Panc1 (cell line): ENCODE measurements at regions of chr13 and their contacts with region 1.

Region 1: GRCh38 chr13:20960663-20961309 is 58.2 kb upstream of the XPO4 start:
- DNase-seq: no peak
- ATAC-seq: no peak
- H3K4me3 ChIP-seq: peak overlapping the region; percentile 14 to 35
- H3K27ac ChIP-seq: no peak overlapping the region
- H3K4me1 ChIP-seq: peaks cover 2% of the 10 kb centered on the region; the same call in 1 of the 2 replicates
- H3K27me3 ChIP-seq: no peaks in the 10 kb centered on the region
- CTCF ChIP-seq: no peak

Region 2: DNA sequence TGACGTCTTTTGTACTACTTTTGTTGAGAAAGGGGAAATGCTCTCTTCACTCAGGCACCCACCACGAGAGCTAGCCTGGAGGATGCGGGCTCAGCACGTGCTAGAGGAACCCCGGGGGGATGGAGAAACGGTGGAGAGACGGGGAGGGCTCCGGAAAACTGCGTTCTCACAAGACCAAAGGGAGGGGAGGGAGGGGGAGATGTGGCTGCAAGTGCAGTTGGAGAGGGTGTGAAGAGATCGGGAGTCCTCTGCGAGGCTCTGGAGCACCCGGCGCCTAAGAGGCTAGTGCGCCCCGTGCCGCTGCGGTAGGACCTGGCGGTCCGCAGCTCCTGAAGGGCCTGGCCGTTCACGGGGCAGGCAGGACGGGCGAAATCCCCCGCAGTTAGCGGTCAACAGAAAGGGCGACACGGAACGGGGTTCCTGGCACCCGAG is 14.8 kb before region 1 on chr13:
- CTCF ChIA-PET with region 1: interaction called, 16 read pairs
- POLR2A ChIA-PET with region 1: no interaction called
- in situ Hi-C with region 1: no loop called
- intact Hi-C with region 1: no loop called
- DNase-seq: no peak
- ATAC-seq: no peak
- H3K4me3 ChIP-seq: no peak overlapping the region
- H3K27ac ChIP-seq: no peak overlapping the region
- H3K4me1 ChIP-seq: no peaks in the 10 kb centered on the region
- H3K27me3 ChIP-seq: no peaks in the 10 kb centered on the region
- CTCF ChIP-seq: no peak

Region 3: DNA sequence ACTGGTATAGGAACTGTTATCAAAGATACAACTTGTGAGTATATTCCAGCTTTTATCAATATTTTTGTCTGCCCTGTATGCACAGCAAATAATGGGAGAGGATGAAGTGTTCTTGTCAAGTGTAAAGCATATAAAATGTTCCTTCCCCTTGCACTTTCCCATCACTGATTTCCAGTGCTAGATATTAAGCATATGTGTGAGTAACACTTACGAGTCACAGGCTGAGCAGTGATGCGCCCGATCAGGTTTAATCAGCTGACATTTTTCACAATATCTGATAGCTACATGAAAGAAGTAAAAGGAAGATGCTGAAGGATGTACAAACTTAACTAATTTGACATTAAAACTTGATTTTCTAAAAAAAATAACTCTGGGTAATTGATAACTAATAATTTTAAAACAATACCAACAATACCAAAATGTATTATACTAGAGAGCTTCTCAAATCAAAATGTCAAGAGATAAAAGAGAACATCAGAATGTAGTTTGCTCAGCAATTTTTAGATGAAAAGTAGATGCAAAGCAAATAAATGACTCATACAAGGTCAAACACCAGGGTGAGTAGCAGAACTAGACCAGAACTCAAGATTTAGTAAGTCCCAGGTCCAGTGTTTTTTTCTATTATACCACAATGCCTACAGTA is 441.9 kb after region 1 on chr13:
- CTCF ChIA-PET with region 1: no interaction called
- POLR2A ChIA-PET with region 1: no interaction called
- in situ Hi-C with region 1: no loop called
- intact Hi-C with region 1: no loop called
- DNase-seq: no peak
- ATAC-seq: no peak
- H3K4me3 ChIP-seq: no peak overlapping the region
- H3K27ac ChIP-seq: no peak overlapping the region
- H3K4me1 ChIP-seq: peaks cover 6% of the 10 kb centered on the region; the same call in 1 of the 2 replicates
- H3K27me3 ChIP-seq: no peaks in the 10 kb centered on the region
- CTCF ChIP-seq: no peak